ENCODE measurements at regions of chr4 and their contacts with region 1.

Region 1: GRCh38 chr4:27684610-27685011 is 824.0 kb downstream of the STIM2 start:
- DNase-seq: peak; percentile 15
- H3K4me3 ChIP-seq: no peak overlapping the region
- H3K27ac ChIP-seq: no peak overlapping the region
- H3K4me1 ChIP-seq: no peaks in the 10 kb centered on the region
- H3K27me3 ChIP-seq: no peaks in the 10 kb centered on the region
- CTCF ChIP-seq: peak; percentile 75
- EP300 ChIP-seq: no peak
- RAD21 ChIP-seq: peak; percentile 78

Region 2: DNA sequence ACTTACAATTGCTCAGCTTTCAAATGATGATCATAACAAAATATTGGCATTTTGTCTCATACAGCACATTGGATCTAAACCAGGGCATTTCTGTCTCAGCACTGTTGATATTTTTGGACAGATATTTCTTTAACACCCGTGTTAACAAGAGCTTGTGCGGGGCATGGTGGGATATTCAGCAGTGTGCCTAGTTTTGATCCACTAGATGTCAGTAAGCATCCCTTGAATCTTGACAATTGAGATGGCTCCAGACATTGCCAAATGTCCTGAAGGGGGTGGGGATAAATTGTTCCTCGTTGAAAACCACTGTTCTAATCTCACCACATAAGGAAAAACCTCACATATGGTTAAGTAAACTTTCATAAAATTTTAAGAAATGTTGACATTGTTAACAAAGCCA is 17.7 kb before region 1 on chr4:
- CTCF ChIA-PET with region 1: interaction called, 39 read pairs
- POLR2A ChIA-PET with region 1: no interaction called
- DNase-seq: peak; percentile 3
- H3K4me3 ChIP-seq: no peak overlapping the region
- H3K27ac ChIP-seq: no peak overlapping the region
- H3K4me1 ChIP-seq: no peaks in the 10 kb centered on the region
- H3K27me3 ChIP-seq: no peaks in the 10 kb centered on the region
- CTCF ChIP-seq: 0 out of 2 replicates have a peak, but pooled peaks have one; percentile 8
- EP300 ChIP-seq: no peak
- RAD21 ChIP-seq: no peak

Region 3: DNA sequence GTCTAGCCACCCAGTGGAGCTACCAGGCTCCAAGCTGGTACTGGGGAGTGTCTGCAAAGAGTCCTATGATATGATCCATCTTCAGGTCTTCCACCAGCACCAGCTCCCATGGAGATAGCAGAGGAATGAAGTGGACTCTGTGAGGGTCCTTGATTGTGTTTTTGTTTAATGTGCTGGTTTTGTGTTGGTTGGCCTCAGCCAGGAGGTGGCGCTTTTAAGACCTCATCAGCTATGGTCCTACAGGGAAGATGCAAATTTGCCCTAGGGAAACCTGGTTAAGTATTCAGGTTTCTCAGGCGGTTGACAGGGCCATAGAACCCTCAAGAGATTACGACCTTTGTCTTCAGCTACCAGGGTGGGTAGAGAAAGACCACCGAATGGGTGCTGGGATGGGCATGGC is 317.1 kb after region 1 on chr4:
- CTCF ChIA-PET with region 1: no interaction called
- POLR2A ChIA-PET with region 1: no interaction called
- DNase-seq: no peak
- H3K4me3 ChIP-seq: no peak overlapping the region
- H3K27ac ChIP-seq: no peak overlapping the region
- H3K4me1 ChIP-seq: no peaks in the 10 kb centered on the region
- H3K27me3 ChIP-seq: no peaks in the 10 kb centered on the region
- CTCF ChIP-seq: peak; percentile 25; the same call in 1 of the 2 replicates
- EP300 ChIP-seq: no peak
- RAD21 ChIP-seq: no peak